CD4-positive, alpha-beta T cell (primary cell): ENCODE measurements at regions of chr16 and their contacts with region 1.

Region 1: DNA sequence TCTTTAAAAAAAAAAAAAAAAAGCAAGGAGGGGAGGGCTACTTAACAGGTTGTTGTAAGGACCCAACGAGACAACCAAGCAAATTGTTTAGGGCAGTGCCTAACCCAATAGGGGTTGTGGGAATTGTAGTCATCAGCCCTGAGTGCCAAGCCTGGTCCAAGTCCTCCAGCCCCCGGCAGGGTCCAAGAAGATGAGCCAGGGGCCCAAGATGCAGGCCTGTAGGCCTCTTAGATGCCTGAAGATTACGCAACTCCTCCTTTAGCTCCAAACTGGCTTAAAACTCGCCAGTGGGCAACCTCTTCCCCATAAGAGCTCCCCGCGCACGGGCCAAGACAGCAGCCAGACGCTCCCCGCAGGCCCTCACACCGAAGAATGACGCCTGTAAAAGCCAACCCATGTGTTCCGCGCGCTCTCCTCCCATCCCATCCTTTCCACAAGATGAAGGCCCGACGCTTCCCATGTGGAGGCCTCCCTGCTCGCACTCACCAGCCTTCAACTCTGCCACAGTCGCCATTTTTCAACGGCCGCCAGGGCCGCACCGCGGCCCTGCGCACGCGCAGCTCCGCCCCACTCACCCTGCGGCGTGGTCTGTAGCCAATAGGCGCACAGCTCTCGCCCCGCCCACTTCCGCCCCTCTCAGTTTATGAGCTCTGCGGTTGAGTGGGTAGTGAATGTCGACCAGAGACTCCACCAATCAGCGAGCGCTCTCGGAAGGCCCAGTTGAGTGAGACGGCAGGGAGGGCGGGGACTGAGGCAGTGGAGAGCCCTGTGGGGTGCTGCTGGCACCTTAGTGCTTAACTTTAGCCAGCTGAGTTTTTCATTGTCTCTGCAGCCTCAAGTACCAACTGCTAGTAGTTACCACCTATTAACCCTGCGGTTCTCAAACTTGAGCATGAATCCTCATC is at the start of gene CEP20:
- DNase-seq: peak; percentile 99 to 100 (median 100)
- ATAC-seq: peak; percentile 97
- H3K4me3 ChIP-seq: peak within 1 kb of the TSS; percentile 88
- H3K4me3 Mint-ChIP-seq: peak within 1 kb of the TSS; percentile 99
- H3K27ac ChIP-seq: peak within 1 kb of the TSS; percentile 74 to 77
- H3K27ac Mint-ChIP-seq: peak within 1 kb of the TSS; percentile 91
- H3K4me1 ChIP-seq: peaks cover 24% of the 10 kb centered on the region
- H3K4me1 Mint-ChIP-seq: peaks cover 30% of the 10 kb centered on the region
- H3K27me3 ChIP-seq: no peaks in the 10 kb centered on the region
- H3K27me3 Mint-ChIP-seq: no peaks in the 10 kb centered on the region
- CTCF ChIP-seq: no peak
- total RNA-seq, gene CEP20: 14.4 to 15.5 TPM

Region 2: DNA sequence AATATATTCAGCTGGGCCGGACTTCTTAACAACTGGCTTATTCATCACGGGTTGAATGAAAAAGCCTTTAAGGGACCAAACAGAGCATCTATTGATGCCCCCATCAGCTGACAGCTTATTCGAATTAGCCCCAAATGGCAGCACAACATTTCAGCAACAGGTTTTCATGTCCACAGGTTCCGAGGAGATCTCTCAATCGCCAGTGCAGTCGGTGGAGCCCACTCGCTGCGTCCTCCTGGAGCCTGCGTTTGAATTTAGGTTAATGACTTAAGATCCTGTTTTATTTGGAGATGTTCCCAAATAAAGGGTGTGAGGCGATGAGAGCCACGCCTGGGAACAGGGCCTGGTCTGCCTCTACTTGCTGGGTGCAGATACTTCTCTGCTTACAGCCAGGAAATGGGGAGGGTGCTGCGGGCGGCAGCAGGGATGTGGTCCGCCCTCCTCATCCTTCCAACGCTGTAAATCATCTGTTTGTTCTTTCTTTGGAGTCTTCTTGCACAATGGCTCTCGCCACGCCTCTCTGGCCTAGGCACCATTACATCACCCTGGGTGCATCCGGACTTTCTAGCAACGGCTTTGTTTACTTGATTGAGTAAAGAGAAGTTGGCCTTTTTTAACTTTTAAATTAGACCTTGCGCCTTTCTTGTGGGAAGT is 215.7 kb before region 1 on chr16:
- CTCF ChIA-PET with region 1: no interaction called
- POLR2A ChIA-PET with region 1: no interaction called
- intact Hi-C with region 1: loop called in 1 of 2 experiments (anchors 10 kb)
- DNase-seq: peak; percentile 57 to 93 (median 78)
- ATAC-seq: peak; percentile 95
- H3K4me3 ChIP-seq: peak overlapping the region; percentile 26
- H3K4me3 Mint-ChIP-seq: peak overlapping the region; percentile 40
- H3K27ac ChIP-seq: peak overlapping the region; percentile 94 to 96
- H3K27ac Mint-ChIP-seq: peak overlapping the region; percentile 92
- H3K4me1 ChIP-seq: peaks cover 44% of the 10 kb centered on the region
- H3K4me1 Mint-ChIP-seq: peaks cover 39% of the 10 kb centered on the region
- H3K27me3 ChIP-seq: no peaks in the 10 kb centered on the region
- H3K27me3 Mint-ChIP-seq: no peaks in the 10 kb centered on the region
- CTCF ChIP-seq: no peak

Region 3: GRCh38 chr16:15961060-15961511 is 72.8 kb after region 1 on chr16:
- CTCF ChIA-PET with region 1: no interaction called
- POLR2A ChIA-PET with region 1: interaction called, 14 read pairs
- intact Hi-C with region 1: loop called in 1 of 2 experiments (anchors 1 kb)
- DNase-seq: peak; percentile 46 to 95 (median 60)
- ATAC-seq: peak; percentile 84
- H3K4me3 ChIP-seq: peak overlapping the region; percentile 49
- H3K4me3 Mint-ChIP-seq: peak overlapping the region; percentile 73
- H3K27ac ChIP-seq: peak overlapping the region; percentile 86 to 91
- H3K27ac Mint-ChIP-seq: peak overlapping the region; percentile 89
- H3K4me1 ChIP-seq: peaks cover 79% of the 10 kb centered on the region
- H3K4me1 Mint-ChIP-seq: peaks cover 73% of the 10 kb centered on the region
- H3K27me3 ChIP-seq: no peaks in the 10 kb centered on the region
- H3K27me3 Mint-ChIP-seq: no peaks in the 10 kb centered on the region
- CTCF ChIP-seq: no peak

Region 4: DNA sequence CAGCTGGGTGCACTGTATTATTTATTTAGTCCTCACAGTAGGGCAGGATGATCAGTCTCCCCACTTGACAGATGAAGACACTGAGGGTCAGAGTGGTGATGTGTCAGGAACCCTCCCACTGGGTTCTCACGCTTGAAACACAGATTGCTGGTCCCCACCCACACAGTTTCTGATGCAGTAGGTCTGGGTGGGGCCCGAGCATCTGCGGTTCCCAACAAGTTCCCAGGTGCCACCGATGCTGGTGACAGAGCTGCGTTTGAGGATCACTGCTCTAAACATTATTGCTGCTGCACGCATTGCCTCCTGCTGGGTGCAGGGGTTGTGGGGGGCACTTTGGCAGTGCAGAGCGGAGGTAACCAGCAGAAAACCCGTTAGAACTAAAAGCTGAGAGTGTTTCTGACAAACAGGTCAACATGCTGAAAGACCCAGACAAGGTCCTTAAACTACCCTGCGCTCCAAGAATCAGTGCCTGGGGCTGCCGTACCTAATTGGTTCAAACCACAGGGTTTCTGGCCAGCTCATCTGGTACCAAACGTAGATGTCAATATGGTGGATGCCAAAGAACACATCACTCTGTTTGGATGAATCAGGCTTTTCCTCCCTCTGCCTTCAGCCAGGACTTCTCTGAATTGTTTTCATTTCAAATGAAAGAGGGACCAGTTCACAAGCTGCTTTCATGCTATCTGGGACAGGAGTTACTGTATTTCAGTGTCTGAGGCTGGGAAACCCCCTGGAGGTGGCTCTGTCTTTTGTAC is 137.1 kb after region 1 on chr16:
- CTCF ChIA-PET with region 1: interaction called, 3 read pairs
- POLR2A ChIA-PET with region 1: interaction called, 4 read pairs
- intact Hi-C with region 1: loop called in 1 of 2 experiments (anchors 5 kb)
- DNase-seq: peak in 11 of 14 experiments; percentile 18 to 79 (median 44)
- ATAC-seq: peak; percentile 77
- H3K4me3 ChIP-seq: no peak overlapping the region
- H3K4me3 Mint-ChIP-seq: peak overlapping the region; percentile 59
- H3K27ac ChIP-seq: peak overlapping the region; percentile 18 to 76
- H3K27ac Mint-ChIP-seq: peak overlapping the region; percentile 90
- H3K4me1 ChIP-seq: peaks cover 24% of the 10 kb centered on the region
- H3K4me1 Mint-ChIP-seq: peaks cover 29% of the 10 kb centered on the region
- H3K27me3 ChIP-seq: no peaks in the 10 kb centered on the region
- H3K27me3 Mint-ChIP-seq: no peaks in the 10 kb centered on the region
- CTCF ChIP-seq: no peak

Region 5: GRCh38 chr16:16033208-16033717 is 144.9 kb after region 1 on chr16:
- CTCF ChIA-PET with region 1: no interaction called
- POLR2A ChIA-PET with region 1: interaction called, 9 read pairs
- intact Hi-C with region 1: loop called (anchors 1 to 5 kb)
- DNase-seq: peak in 6 of 14 experiments; percentile 3 to 82 (median 48)
- ATAC-seq: peak; percentile 93
- H3K4me3 ChIP-seq: peak overlapping the region; percentile 1
- H3K4me3 Mint-ChIP-seq: peak overlapping the region; percentile 40
- H3K27ac ChIP-seq: peak overlapping the region in 1 of 2 donors; percentile 41
- H3K27ac Mint-ChIP-seq: peak overlapping the region; percentile 87
- H3K4me1 ChIP-seq: peaks cover 20% of the 10 kb centered on the region
- H3K4me1 Mint-ChIP-seq: peaks cover 23% of the 10 kb centered on the region
- H3K27me3 ChIP-seq: no peaks in the 10 kb centered on the region
- H3K27me3 Mint-ChIP-seq: no peaks in the 10 kb centered on the region
- CTCF ChIP-seq: no peak